ENCODE measurements at regions of chr14 and their contacts with region 1.

Region 1: GRCh38 chr14:74029136-74029535 is 10.0 kb downstream of the BBOF1 start:
- DNase-seq: no peak
- ATAC-seq: no peak

Region 2: DNA sequence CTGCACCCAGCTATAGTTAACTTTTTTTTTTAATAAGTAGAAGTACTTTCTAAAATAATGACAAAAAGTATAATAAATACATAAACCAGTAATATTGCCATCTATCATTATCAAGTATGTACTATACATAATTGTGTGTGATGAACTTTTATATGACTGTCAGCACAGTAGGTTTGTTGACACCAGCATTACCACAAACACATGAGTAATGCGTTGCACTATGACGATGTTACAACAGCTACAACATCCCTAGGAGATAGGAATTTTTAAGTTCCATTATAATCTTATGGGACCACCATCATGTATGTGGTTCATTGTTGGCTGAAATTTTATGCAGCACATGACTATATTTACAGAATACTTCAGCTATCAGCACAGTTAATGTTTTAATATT is 147.3 kb after region 1 on chr14:
- intact Hi-C with region 1: no loop called
- DNase-seq: no peak
- ATAC-seq: no peak

Region 3: DNA sequence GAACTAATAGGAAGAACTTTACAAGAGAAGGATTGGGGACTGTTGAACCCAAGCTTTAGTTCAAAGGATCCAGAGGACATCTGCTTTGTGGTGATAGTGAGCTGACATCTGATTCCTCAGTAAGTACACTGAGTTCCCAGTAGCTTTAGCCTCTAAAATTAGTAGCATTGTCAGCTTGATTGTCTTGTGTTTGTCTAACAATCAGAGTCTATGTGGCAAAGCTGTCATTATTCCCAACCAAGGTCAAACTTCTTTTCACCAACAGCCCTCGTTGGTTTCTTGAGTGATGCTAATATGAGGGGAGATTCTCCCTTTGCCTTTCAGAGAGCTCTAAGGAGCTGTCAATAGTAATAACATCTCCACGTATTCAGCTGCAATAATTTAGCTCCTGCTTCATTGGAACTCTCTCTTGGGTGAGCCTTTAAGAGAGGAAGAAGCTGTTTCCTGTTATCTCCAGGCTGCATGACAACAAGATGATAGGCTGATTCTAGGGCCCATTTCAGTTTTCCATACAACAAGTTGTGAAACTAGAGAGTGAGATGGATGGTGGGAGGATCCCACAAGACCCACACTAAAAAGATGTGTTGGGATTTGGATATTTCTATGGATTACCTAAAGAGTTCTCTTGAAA is 1906.0 kb after region 1 on chr14:
- intact Hi-C with region 1: loop called (anchors 5 kb)
- DNase-seq: no peak
- ATAC-seq: no peak

Measured in sciatic nerve (tissue), 2 donors.